ENCODE measurements at regions of chrX and their contacts with region 1.

Region 1: GRCh38 chrX:136260771-136261170 is 9.6 kb upstream of the MAP7D3 start:
- DNase-seq: no peak
- ATAC-seq: no peak
- H3K4me3 ChIP-seq: no peak overlapping the region
- H3K27ac ChIP-seq: no peak overlapping the region
- H3K4me1 ChIP-seq: peaks cover 0 to 19% (median 3%) of the 10 kb centered on the region in 12 donors
- H3K27me3 ChIP-seq: peaks cover 0 to 5% (median 0%) of the 10 kb centered on the region in 9 donors
- CTCF ChIP-seq: no peak
- POLR2A ChIP-seq: no peak

Region 2: GRCh38 chrX:136162831-136163570 is 97.8 kb before region 1 on chrX:
- intact Hi-C with region 1: loop called in 4 of 10 experiments (anchors 5 to 10 kb)
- DNase-seq: peak; percentile 47 to 70 (median 63)
- ATAC-seq: peak; percentile 41 to 80 (median 78)
- H3K4me3 ChIP-seq: peak overlapping the region in 1 of 12 donors; percentile 0
- H3K27ac ChIP-seq: peak overlapping the region in 10 of 12 donors; percentile 9 to 87 (median 56)
- H3K4me1 ChIP-seq: peaks cover 0 to 76% (median 11%) of the 10 kb centered on the region in 12 donors
- H3K27me3 ChIP-seq: peaks cover 0 to 8% (median 0%) of the 10 kb centered on the region in 9 donors
- CTCF ChIP-seq: peak; percentile 47 to 78 (median 66)
- POLR2A ChIP-seq: no peak

Measured in heart left ventricle (tissue), 16 donors.